Posterior vena cava (tissue), 2 donors: ENCODE measurements at regions of chr7 and their contacts with region 1.

Region 1: GRCh38 chr7:74388880-74389415 is 64.8 kb upstream of the GTF2IRD1 start:
- DNase-seq: no peak

Region 2: GRCh38 chr7:74223711-74224510 is 165.0 kb before region 1 on chr7:
- intact Hi-C with region 1: loop called in 1 of 2 experiments (anchors 5 kb)
- DNase-seq: no peak